Activated naive CD4-positive, alpha-beta T cell treated with anti-CD3 and anti-CD28 coated beads for 36 hours (primary cell): ENCODE measurements at regions of chr19 and their contacts with region 1.

Region 1: GRCh38 chr19:10835754-10836477 is at the start of gene TMED1:
- DNase-seq: peak; percentile 98
- H3K4me3 Mint-ChIP-seq: peak within 1 kb of the TSS; percentile 94
- H3K27ac Mint-ChIP-seq: peak within 1 kb of the TSS; percentile 97
- H3K4me1 Mint-ChIP-seq: peaks cover 14% of the 10 kb centered on the region
- H3K27me3 Mint-ChIP-seq: no peaks in the 10 kb centered on the region
- total RNA-seq, gene TMED1: 15.3 to 16.7 TPM

Region 2: DNA sequence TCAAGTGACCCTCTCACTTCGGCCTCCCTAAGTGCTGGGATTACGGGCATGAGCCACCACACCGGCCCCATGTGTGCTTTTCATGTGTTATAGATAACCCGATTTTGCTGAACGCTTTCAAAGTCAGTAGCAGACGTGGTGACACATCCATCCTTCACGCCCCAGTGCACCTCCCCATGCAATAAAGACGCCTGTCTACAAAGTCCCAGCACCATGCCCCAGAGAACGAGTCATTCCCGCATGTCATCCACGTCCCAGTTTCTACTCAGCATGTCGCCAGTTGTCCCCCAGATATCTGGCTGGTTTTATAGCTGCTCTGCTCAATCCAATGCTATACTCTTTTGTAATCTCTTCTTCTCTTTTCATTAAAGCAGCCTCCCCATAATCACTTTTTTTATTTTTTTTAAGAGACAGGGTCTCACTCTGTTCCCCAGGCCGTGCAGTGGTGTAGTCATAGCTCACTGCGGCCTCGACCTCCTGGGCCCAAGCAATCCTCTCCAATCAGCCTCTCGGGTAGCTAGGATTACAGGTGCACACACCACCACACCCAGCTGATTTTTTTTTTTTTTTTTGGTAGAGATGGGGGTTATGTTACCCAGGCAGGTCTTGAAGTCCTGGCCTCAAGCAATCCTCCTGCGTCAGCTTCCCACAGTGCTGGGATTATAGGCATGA is 75.5 kb before region 1 on chr19:
- CTCF ChIA-PET with region 1: no interaction called
- intact Hi-C with region 1: loop called (anchors 1 kb)
- DNase-seq: peak; percentile 65
- H3K4me3 Mint-ChIP-seq: peak overlapping the region; percentile 71
- H3K27ac Mint-ChIP-seq: peak overlapping the region; percentile 96
- H3K4me1 Mint-ChIP-seq: peaks cover 88% of the 10 kb centered on the region
- H3K27me3 Mint-ChIP-seq: no peaks in the 10 kb centered on the region

Region 3: DNA sequence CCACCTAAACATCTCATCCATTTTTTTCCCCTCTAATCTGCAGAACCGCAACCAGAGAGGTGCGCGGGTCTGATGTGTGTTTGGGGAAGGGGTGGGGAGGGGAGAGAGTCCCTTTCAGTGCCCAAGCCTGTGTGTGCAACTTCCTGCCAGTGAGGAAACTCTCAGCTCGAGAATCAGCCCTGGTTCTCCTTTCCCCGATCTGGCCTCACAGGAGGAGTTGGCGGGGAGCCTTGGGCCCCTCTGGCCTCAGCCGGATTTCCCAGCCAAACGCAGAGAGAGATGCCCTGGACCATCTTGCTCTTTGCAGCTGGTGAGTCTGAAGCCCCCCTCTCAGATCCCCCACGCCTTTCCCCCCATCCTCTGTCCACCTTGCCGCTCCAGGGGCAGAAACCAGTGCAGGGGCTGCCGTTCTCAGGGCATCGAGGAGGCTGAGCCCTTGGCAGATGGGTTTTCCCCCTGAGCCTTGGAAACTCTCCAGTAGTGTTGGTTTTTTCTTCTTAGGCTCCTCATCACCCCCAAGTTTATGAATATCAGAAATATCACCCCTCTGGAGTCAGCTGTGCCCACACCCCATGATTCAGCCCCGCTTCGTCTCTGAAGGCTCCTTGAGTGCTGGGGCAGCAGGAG is 12.4 kb after region 1 on chr19 and contains the start of gene C19orf38:
- CTCF ChIA-PET with region 1: interaction called, 4 read pairs
- intact Hi-C with region 1: loop called (anchors 1 kb)
- DNase-seq: peak; percentile 61
- H3K4me3 Mint-ChIP-seq: peak within 1 kb of the TSS; percentile 71
- H3K27ac Mint-ChIP-seq: peak within 1 kb of the TSS; percentile 64
- H3K4me1 Mint-ChIP-seq: peaks cover 18% of the 10 kb centered on the region
- H3K27me3 Mint-ChIP-seq: no peaks in the 10 kb centered on the region
- total RNA-seq, gene C19orf38: 4.4 to 4.8 TPM

Region 4: DNA sequence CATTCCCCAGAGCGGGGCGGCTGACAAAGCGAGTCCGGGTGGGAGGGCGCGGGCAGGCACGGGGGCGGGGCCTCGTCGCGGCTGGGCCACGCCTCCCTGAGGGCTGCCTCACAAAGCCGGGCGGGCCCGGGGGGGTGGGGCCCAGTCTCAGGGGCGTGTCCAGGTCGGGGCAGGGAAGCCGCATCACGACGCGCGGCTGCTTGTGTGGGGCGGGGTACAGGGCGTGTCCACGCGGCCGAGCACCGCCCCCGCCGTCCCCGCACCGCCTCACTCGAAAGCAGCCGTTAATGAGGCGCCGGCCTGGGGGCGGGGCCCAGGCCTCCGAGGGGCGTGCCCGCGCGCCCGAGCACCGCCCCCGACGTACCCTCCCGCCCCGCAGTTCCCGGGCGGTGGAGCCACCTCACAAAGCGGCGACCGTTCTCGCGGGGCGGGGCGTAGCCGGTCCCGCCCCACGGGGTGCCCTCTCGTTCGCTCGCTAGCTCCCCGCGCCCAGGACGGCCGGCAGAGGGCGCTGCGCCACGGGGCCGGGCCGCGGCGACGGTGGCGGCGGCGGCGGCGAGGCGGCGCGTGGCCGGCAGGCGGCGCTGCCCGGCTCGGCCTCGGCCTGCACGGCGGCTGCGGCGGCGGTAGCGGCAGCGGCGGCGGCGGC is 35.2 kb after region 1 on chr19 and contains the start of gene CARM1:
- CTCF ChIA-PET with region 1: interaction called, 3 read pairs
- intact Hi-C with region 1: loop called (anchors 1 kb)
- DNase-seq: peak; percentile 99
- H3K4me3 Mint-ChIP-seq: peak within 1 kb of the TSS; percentile 85
- H3K27ac Mint-ChIP-seq: peak within 1 kb of the TSS; percentile 93
- H3K4me1 Mint-ChIP-seq: peaks cover 31% of the 10 kb centered on the region
- H3K27me3 Mint-ChIP-seq: no peaks in the 10 kb centered on the region
- total RNA-seq, gene CARM1: 88.4 to 89.3 TPM